ENCODE measurements at regions of chr17 and their contacts with region 1.

Region 1: DNA sequence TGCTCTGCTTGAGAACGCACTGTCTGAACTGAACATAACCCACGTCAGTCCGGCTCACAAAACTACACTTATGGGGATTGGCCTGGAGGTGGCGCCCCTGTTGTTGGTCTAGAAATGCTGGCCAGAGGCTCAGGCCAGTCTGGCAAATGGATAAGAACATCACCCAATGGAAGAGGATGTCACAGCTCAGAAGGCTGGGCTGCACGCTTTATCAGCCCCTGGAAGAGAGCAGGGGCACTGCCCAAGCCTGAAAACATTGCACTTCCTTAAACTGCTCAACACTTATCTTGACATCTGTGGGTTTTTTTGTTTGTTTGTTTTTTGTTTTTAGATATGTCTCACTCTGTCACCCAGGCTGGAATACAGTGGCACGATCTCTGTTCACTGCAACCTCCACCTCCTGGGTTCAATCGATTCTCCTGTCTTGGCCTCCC is 24.8 kb upstream of the BPTF start:
- DNase-seq: peak; percentile 76 to 81
- H3K4me3 ChIP-seq: no peak overlapping the region
- H3K4me3 Mint-ChIP-seq: no peak overlapping the region
- H3K27ac Mint-ChIP-seq: no peak overlapping the region
- H3K4me1 ChIP-seq: no peaks in the 10 kb centered on the region
- H3K4me1 Mint-ChIP-seq: no peaks in the 10 kb centered on the region
- H3K27me3 ChIP-seq: no peaks in the 10 kb centered on the region
- H3K27me3 Mint-ChIP-seq: peaks cover 3% of the 10 kb centered on the region
- CTCF ChIP-seq: peak; percentile 73 to 84

Region 2: GRCh38 chr17:67824735-67825626 is 24.5 kb after region 1 on chr17 and contains the start of gene BPTF:
- CTCF ChIA-PET with region 1: interaction called, 8 read pairs
- POLR2A ChIA-PET with region 1: interaction called, 3 read pairs
- intact Hi-C with region 1: loop called (anchors 1 kb)
- DNase-seq: peak; percentile 92 to 95
- H3K4me3 ChIP-seq: peak within 1 kb of the TSS; percentile 99
- H3K4me3 Mint-ChIP-seq: peak within 1 kb of the TSS; percentile 91
- H3K27ac Mint-ChIP-seq: peak within 1 kb of the TSS; percentile 88
- H3K4me1 ChIP-seq: no peaks in the 10 kb centered on the region
- H3K4me1 Mint-ChIP-seq: peaks cover 5% of the 10 kb centered on the region
- H3K27me3 ChIP-seq: no peaks in the 10 kb centered on the region
- H3K27me3 Mint-ChIP-seq: no peaks in the 10 kb centered on the region
- CTCF ChIP-seq: peak; percentile 73 to 92
- total RNA-seq, gene BPTF: 96.5 and 101 TPM in 2 replicates

Region 3: GRCh38 chr17:67855504-67856324 is 55.2 kb after region 1 on chr17:
- CTCF ChIA-PET with region 1: no interaction called
- POLR2A ChIA-PET with region 1: no interaction called
- intact Hi-C with region 1: no loop called
- DNase-seq: no peak
- H3K4me3 ChIP-seq: no peak overlapping the region
- H3K4me3 Mint-ChIP-seq: no peak overlapping the region
- H3K27ac Mint-ChIP-seq: no peak overlapping the region
- H3K4me1 ChIP-seq: peaks cover 2% of the 10 kb centered on the region; the same call in 1 of the 2 replicates
- H3K4me1 Mint-ChIP-seq: peaks cover 9% of the 10 kb centered on the region
- H3K27me3 ChIP-seq: no peaks in the 10 kb centered on the region
- H3K27me3 Mint-ChIP-seq: no peaks in the 10 kb centered on the region
- CTCF ChIP-seq: no peak

Region 4: DNA sequence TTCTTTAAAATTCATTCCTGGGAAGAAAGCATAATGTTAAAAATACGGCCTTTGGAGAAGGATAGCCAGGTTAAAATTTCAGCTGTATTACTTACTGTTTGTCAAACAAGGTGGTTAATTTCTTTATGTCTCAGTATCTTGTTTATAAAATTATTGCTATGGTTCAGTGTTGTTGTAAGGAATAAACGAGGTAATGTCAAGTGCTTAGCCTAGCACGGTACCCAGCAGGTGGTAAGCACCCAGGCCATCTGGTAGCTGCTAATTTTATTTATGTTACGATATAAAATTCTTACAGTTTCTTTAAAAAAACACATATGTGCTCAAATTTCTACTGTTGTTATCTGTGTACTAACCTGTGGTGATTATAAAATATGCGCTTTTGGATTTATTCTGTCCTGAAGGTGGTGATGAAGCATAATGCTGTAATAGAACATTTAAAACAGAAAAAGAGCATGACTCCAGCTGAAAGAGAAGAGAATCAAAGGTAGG is 146.9 kb after region 1 on chr17:
- CTCF ChIA-PET with region 1: no interaction called
- POLR2A ChIA-PET with region 1: interaction called, 12 read pairs
- intact Hi-C with region 1: no loop called
- DNase-seq: no peak
- H3K4me3 ChIP-seq: no peak overlapping the region
- H3K4me3 Mint-ChIP-seq: no peak overlapping the region
- H3K27ac Mint-ChIP-seq: no peak overlapping the region
- H3K4me1 ChIP-seq: no peaks in the 10 kb centered on the region
- H3K4me1 Mint-ChIP-seq: no peaks in the 10 kb centered on the region
- H3K27me3 ChIP-seq: no peaks in the 10 kb centered on the region
- H3K27me3 Mint-ChIP-seq: no peaks in the 10 kb centered on the region
- CTCF ChIP-seq: no peak

Measured in Caco-2 (cell line).